Activated B cell treated with CpG ODN at 0.5 μM for 24 hours (primary cell): ENCODE measurements at regions of chr13 and their contacts with region 1.

Region 1: GRCh38 chr13:49996951-49997895 is at the start of gene TRIM13:
- DNase-seq: peak; percentile 82
- ATAC-seq: peak; percentile 72
- H3K4me3 Mint-ChIP-seq: peak within 1 kb of the TSS; percentile 88
- H3K27ac Mint-ChIP-seq: peak within 1 kb of the TSS; percentile 93
- H3K4me1 Mint-ChIP-seq: peaks cover 54% of the 10 kb centered on the region
- H3K27me3 Mint-ChIP-seq: no peaks in the 10 kb centered on the region
- CTCF ChIP-seq: peak; percentile 49
- total RNA-seq, gene TRIM13: 49.3 and 54.4 TPM in 2 replicates

Region 2: GRCh38 chr13:49936085-49936940 is 60.9 kb before region 1 on chr13 and contains the start of gene SPRYD7:
- CTCF ChIA-PET with region 1: no interaction called
- POLR2A ChIA-PET with region 1: interaction called, 18 read pairs
- intact Hi-C with region 1: loop called (anchors 1 kb)
- DNase-seq: peak; percentile 100
- ATAC-seq: peak; percentile 98
- H3K4me3 Mint-ChIP-seq: peak within 1 kb of the TSS; percentile 97
- H3K27ac Mint-ChIP-seq: peak within 1 kb of the TSS; percentile 91
- H3K4me1 Mint-ChIP-seq: peaks cover 32% of the 10 kb centered on the region
- H3K27me3 Mint-ChIP-seq: no peaks in the 10 kb centered on the region
- CTCF ChIP-seq: no peak
- total RNA-seq, gene SPRYD7: 3.7 and 4.5 TPM in 2 replicates

Region 3: DNA sequence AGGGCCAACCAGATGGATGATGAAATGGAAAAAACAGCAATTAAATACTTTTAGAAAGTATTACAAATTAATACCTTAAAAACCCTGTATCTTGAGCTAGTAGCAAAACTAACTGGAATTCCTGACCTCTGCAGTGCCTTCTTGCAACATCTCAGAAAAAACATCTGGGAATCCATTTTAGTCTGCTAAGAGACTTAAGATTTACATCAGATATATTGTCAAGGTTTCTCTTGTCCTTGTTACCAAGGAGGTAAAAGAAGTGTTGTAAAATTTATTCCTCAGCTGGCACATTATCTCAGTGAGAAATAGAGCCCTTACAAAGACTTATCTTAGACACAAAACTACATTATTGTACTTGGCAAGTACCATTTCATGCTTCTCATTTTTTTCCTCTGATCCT is 36.5 kb after region 1 on chr13:
- CTCF ChIA-PET with region 1: interaction called, 3 read pairs
- POLR2A ChIA-PET with region 1: interaction called, 4 read pairs
- intact Hi-C with region 1: loop called (anchors 5 kb)
- DNase-seq: no peak
- ATAC-seq: no peak
- H3K4me3 Mint-ChIP-seq: no peak overlapping the region
- H3K27ac Mint-ChIP-seq: peak overlapping the region; percentile 2
- H3K4me1 Mint-ChIP-seq: peaks cover 14% of the 10 kb centered on the region
- H3K27me3 Mint-ChIP-seq: no peaks in the 10 kb centered on the region
- CTCF ChIP-seq: no peak

Region 4: GRCh38 chr13:50130123-50130946 is 133.1 kb after region 1 on chr13:
- CTCF ChIA-PET with region 1: interaction called, 21 read pairs
- POLR2A ChIA-PET with region 1: interaction called, 271 read pairs
- intact Hi-C with region 1: loop called (anchors 1 kb)
- DNase-seq: peak; percentile 54
- ATAC-seq: peak; percentile 36
- H3K4me3 Mint-ChIP-seq: peak overlapping the region; percentile 89
- H3K27ac Mint-ChIP-seq: peak overlapping the region; percentile 95
- H3K4me1 Mint-ChIP-seq: peaks cover 60% of the 10 kb centered on the region
- H3K27me3 Mint-ChIP-seq: peaks cover 16% of the 10 kb centered on the region
- CTCF ChIP-seq: no peak

Region 5: DNA sequence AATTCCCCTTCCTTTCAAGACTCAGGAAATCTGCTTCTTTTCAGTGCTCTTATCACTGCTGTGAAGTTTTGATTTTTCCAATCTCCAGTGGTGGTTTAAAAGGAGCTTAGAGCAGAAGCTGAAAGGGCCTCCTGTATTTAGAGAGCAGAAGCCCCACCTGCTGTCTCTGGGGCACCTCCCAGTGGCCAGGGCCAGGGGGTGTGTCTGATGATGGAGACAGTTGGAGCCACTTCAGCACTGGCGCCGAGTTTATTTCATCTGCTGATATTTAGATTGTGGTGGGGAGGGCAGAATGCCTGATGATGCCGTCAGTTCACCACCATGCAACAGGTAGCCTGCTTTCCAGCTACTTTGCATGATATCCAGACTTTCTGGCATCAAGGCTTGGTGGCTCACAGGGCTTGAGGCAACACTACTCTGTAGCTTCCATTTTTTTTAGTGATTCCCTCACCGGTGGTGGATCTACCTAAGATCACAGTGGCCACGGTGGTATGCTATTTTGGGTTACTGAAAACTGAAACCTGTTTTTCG is 389.9 kb after region 1 on chr13:
- CTCF ChIA-PET with region 1: interaction called, 9 read pairs
- POLR2A ChIA-PET with region 1: interaction called, 11 read pairs
- intact Hi-C with region 1: loop called (anchors 1 kb)
- DNase-seq: peak; percentile 28
- ATAC-seq: peak; percentile 81
- H3K4me3 Mint-ChIP-seq: no peak overlapping the region
- H3K27ac Mint-ChIP-seq: no peak overlapping the region
- H3K4me1 Mint-ChIP-seq: peaks cover 4% of the 10 kb centered on the region
- H3K27me3 Mint-ChIP-seq: no peaks in the 10 kb centered on the region
- CTCF ChIP-seq: no peak

Region 6: GRCh38 chr13:50635504-50635903 is 638.3 kb after region 1 on chr13:
- CTCF ChIA-PET with region 1: no interaction called
- POLR2A ChIA-PET with region 1: interaction called, 12 read pairs
- intact Hi-C with region 1: loop called (anchors 5 kb)
- DNase-seq: no peak
- ATAC-seq: peak; percentile 75
- H3K4me3 Mint-ChIP-seq: peak overlapping the region; percentile 61
- H3K27ac Mint-ChIP-seq: peak overlapping the region; percentile 96
- H3K4me1 Mint-ChIP-seq: peaks cover 42% of the 10 kb centered on the region
- H3K27me3 Mint-ChIP-seq: no peaks in the 10 kb centered on the region
- CTCF ChIP-seq: no peak

Region 7: DNA sequence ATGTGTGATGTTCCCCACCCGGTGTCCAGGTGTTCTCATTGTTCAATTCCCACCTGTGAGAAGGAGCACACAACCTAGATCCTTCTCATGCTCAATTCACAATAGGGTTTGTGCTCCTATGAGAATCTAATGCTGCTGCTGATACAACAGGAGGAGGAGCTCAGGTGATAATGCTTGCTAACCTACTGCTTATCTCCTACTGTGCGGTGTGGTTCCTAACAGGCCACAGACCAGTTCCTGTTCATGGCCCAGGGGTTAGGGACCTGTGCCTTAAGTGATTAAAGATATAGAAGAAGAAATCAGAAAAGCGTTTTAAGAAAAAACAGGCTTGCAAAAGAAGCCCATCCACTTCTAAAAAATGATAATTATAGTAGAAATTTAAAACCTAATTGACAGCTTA is 828.8 kb after region 1 on chr13:
- CTCF ChIA-PET with region 1: no interaction called
- POLR2A ChIA-PET with region 1: no interaction called
- intact Hi-C with region 1: no loop called
- DNase-seq: no peak
- ATAC-seq: no peak
- H3K4me3 Mint-ChIP-seq: no peak overlapping the region
- H3K27ac Mint-ChIP-seq: no peak overlapping the region
- H3K4me1 Mint-ChIP-seq: no peaks in the 10 kb centered on the region
- H3K27me3 Mint-ChIP-seq: no peaks in the 10 kb centered on the region
- CTCF ChIP-seq: no peak

Region 8: GRCh38 chr13:50911937-50912795 is 914.9 kb after region 1 on chr13:
- CTCF ChIA-PET with region 1: interaction called, 28 read pairs
- POLR2A ChIA-PET with region 1: interaction called, 81 read pairs
- intact Hi-C with region 1: loop called (anchors 1 kb)
- DNase-seq: peak; percentile 82
- ATAC-seq: peak; percentile 58
- H3K4me3 Mint-ChIP-seq: peak overlapping the region; percentile 93
- H3K27ac Mint-ChIP-seq: peak overlapping the region; percentile 97
- H3K4me1 Mint-ChIP-seq: peaks cover 71% of the 10 kb centered on the region
- H3K27me3 Mint-ChIP-seq: no peaks in the 10 kb centered on the region
- CTCF ChIP-seq: no peak